ENCODE measurements at regions of chr17 and their contacts with region 1.

Region 1: DNA sequence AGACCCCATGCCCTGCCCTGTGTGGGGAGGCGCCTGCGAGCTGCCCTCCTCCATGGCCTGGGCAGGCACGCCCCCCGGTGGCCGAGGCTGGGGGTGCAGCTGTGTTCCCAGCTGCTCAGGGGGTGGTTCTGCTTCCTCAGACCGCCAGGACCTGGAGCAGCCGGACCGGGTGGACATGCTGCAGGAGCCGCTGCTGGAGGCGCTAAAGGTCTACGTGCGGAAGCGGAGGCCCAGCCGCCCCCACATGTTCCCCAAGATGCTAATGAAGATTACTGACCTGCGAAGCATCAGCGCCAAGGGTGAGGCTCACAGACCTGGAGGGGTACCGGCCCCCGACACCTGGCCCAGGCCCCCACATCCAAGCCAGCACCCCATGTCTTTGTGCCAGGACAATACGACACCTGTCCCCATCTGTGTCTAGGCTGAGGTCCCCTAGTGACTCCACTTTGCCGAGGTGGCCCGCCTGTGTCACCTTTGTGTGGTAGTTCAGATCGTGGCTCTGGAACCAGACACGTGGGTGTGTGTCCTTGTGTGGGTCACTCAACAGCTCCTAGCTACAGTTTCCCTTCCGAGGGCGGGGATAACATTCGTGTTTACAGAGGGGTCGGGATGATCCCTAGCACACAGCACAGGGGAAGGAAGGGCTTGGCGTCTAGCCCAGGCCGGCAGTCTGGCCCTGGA is 9.3 kb downstream of the GJD3 start:
- DNase-seq: peak in 1 of 2 experiments; percentile 100
- H3K4me3 ChIP-seq: no peak overlapping the region
- H3K27ac ChIP-seq: no peak overlapping the region
- H3K4me1 ChIP-seq: peaks cover 0 to 20% (median 12%) of the 10 kb centered on the region in 4 experiments; a peak in 6 of 7 replicates
- H3K27me3 ChIP-seq: 0 out of 7 replicates have a peak, but pooled peaks cover 0 to 2% (median 0%) of the 10 kb centered on the region in 4 experiments
- CTCF ChIP-seq: peak; percentile 98 to 99 (median 98)
- EP300 ChIP-seq: peak in 1 of 2 experiments; percentile 21; a peak in 1 of 3 replicates
- POLR2A ChIP-seq: no peak
- RAD21 ChIP-seq: peak; percentile 100

Region 2: GRCh38 chr17:40293363-40293762 is 61.9 kb before region 1 on chr17:
- CTCF ChIA-PET with region 1: interaction called, 23 read pairs
- POLR2A ChIA-PET with region 1: interaction called, 570 read pairs
- DNase-seq: no peak
- H3K4me3 ChIP-seq: no peak overlapping the region
- H3K27ac ChIP-seq: no peak overlapping the region
- H3K4me1 ChIP-seq: peaks cover 0 to 9% (median 7%) of the 10 kb centered on the region in 4 experiments; a peak in 5 of 7 replicates
- H3K27me3 ChIP-seq: no peaks in the 10 kb centered on the region
- CTCF ChIP-seq: no peak
- EP300 ChIP-seq: no peak
- POLR2A ChIP-seq: no peak
- RAD21 ChIP-seq: no peak